ENCODE measurements at regions of chr12 and their contacts with region 1.

Region 1: GRCh38 chr12:45388545-45388944 is 172.7 kb downstream of the ANO6 start:
- DNase-seq: no peak
- ATAC-seq: peak; percentile 46

Region 2: DNA sequence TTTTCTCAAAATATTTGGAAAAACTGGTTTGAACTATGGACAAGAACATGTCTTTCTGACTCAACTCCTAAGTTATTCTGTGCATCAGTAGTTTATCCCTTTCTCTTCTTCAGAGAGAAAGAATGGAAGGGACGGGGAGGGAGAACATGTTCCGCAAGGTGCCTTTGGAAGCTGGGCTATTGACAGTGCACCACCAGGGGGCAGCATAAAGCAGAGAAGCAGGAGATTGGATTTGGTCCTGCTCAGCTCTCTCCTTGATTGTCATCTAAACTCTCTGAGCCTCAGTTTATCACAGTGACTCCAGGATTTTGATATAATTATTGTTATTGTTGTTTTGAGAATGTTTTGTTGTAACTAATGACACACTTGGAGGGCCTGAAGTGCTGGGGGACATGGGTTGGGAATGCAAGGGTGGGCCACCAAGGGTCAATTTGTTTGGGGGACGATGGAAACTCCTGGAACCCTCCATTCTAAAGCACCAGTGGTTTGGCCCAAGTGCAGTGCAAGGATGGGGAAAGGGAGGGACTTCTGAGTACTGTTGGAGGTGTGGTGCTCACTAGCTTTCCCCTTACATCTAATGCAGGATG is 218.0 kb before region 1 on chr12:
- intact Hi-C with region 1: loop called (anchors 10 kb)
- DNase-seq: peak; percentile 78
- ATAC-seq: peak; percentile 73

Measured in left ventricle myocardium superior (tissue), 1 donor.